PC-9 (cell line): ENCODE measurements at regions of chr11 and their contacts with region 1.

Region 1: DNA sequence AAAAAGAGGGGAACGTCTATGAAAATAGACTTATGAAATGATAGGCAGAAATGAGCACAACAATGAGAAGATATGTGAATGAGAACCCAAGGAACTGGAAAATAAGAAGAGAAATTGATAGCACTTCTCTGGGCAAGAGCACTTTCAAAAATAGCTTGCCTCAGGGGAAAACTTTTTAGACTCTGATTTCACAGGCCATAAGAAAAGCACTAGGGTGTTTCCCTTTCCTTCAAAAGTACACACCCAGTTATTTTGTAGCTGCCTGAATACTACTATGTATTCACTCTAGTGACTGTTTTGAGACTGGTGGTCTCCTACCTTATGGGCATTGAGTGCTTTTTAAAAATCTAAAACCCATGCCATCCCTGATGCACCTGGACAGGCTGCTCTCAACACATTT is 172.3 kb upstream of the SOX6 start:
- DNase-seq: no peak
- H3K4me3 ChIP-seq: no peak overlapping the region
- H3K27ac ChIP-seq: no peak overlapping the region
- H3K4me1 ChIP-seq: no peaks in the 10 kb centered on the region
- H3K27me3 ChIP-seq: no peaks in the 10 kb centered on the region
- CTCF ChIP-seq: no peak

Region 2: GRCh38 chr11:16555956-16556355 is 27.3 kb after region 1 on chr11:
- CTCF ChIA-PET with region 1: no interaction called
- POLR2A ChIA-PET with region 1: interaction called, 10 read pairs
- intact Hi-C with region 1: no loop called
- DNase-seq: no peak
- H3K4me3 ChIP-seq: no peak overlapping the region
- H3K27ac ChIP-seq: no peak overlapping the region
- H3K4me1 ChIP-seq: no peaks in the 10 kb centered on the region
- H3K27me3 ChIP-seq: no peaks in the 10 kb centered on the region
- CTCF ChIP-seq: no peak